Ascending aorta (tissue), 2 donors: ENCODE measurements at regions of chr15 and their contacts with region 1.

Region 1: DNA sequence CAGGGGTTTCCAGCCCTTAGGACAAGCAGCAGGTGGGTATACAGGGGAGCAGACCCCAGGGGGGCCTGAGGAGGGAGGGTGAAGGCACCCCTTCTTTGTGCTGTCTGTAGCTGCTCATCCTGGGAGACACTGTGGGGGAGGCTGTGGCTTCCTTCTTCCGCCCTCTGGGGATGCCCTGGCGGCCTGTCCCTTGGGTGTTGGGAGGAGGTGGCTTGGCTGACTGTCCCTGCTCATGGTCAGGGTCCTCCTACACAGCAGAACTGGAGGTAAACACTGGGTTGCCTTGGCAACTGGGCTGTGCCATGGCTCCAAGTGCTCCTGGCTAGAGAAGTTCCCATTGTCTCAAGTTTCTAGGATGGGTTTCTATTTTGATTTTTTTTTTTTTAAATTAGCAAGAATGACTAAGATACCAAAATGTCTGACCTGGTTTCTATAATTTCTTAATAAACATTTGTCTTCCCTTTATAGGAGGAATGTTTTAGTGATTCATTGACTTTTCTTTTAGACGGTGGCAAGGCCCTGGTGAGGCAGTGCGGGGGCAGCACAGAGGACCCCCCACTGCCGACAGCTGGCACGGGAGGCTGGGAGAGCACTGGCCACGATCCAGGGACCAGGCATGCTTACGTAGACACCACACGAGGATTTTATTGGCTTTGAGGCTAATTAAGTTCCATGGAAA is 12.4 kb downstream of the KLF13 start:
- DNase-seq: peak in 1 of 2 donors; percentile 88
- H3K4me3 ChIP-seq: peak overlapping the region in 1 of 2 donors; percentile 19
- H3K27ac ChIP-seq: peak overlapping the region; percentile 66 to 81
- H3K4me1 ChIP-seq: peaks cover 20 to 53% of the 10 kb centered on the region in 2 donors
- H3K27me3 ChIP-seq: no peaks in the 10 kb centered on the region
- CTCF ChIP-seq: no peak

Region 2: GRCh38 chr15:31352911-31353811 is 14.1 kb after region 1 on chr15:
- intact Hi-C with region 1: loop called (anchors 1 kb)
- DNase-seq: peak in 1 of 2 donors; percentile 89
- H3K4me3 ChIP-seq: peak overlapping the region in 1 of 2 donors; percentile 25
- H3K27ac ChIP-seq: peak overlapping the region; percentile 68 to 70
- H3K4me1 ChIP-seq: peaks cover 18 to 38% of the 10 kb centered on the region in 2 donors
- H3K27me3 ChIP-seq: no peaks in the 10 kb centered on the region
- CTCF ChIP-seq: no peak